Right lobe of liver (tissue), 6 donors: ENCODE measurements at regions of chr6 and their contacts with region 1.

Region 1: GRCh38 chr6:13916230-13916944 is 8.4 kb upstream of the RNF182 start:
- DNase-seq: no peak
- ATAC-seq: no peak
- H3K4me3 ChIP-seq: no peak overlapping the region
- H3K27ac ChIP-seq: no peak overlapping the region
- H3K4me1 ChIP-seq: no peaks in the 10 kb centered on the region
- H3K27me3 ChIP-seq: peaks cover 0 to 2% of the 10 kb centered on the region in 2 donors
- CTCF ChIP-seq: no peak
- POLR2A ChIP-seq: no peak

Region 2: GRCh38 chr6:13538084-13538483 is 378.3 kb before region 1 on chr6:
- intact Hi-C with region 1: no loop called
- DNase-seq: no peak
- ATAC-seq: peak; percentile 66 to 81 (median 75)
- H3K4me3 ChIP-seq: no peak overlapping the region
- H3K27ac ChIP-seq: no peak overlapping the region
- H3K4me1 ChIP-seq: peaks cover 0 to 14% (median 0%) of the 10 kb centered on the region in 4 donors
- H3K27me3 ChIP-seq: no peaks in the 10 kb centered on the region
- CTCF ChIP-seq: peak; percentile 37 to 48 (median 42)
- POLR2A ChIP-seq: no peak

Region 3: GRCh38 chr6:13859871-13860555 is 56.4 kb before region 1 on chr6:
- intact Hi-C with region 1: no loop called
- DNase-seq: peak; percentile 25 to 53 (median 45)
- ATAC-seq: peak in 3 of 4 donors; percentile 11 to 36 (median 33)
- H3K4me3 ChIP-seq: peak overlapping the region in 1 of 3 donors; percentile 30
- H3K27ac ChIP-seq: no peak overlapping the region
- H3K4me1 ChIP-seq: peaks cover 0 to 10% (median 0%) of the 10 kb centered on the region in 4 donors
- H3K27me3 ChIP-seq: peaks cover 7 to 15% of the 10 kb centered on the region in 2 donors
- CTCF ChIP-seq: no peak
- POLR2A ChIP-seq: no peak

Region 4: GRCh38 chr6:14059791-14060444 is 143.5 kb after region 1 on chr6:
- intact Hi-C with region 1: loop called in 1 of 2 experiments (anchors 10 kb)
- DNase-seq: peak; percentile 89 to 92 (median 91)
- ATAC-seq: peak; percentile 93 to 98 (median 95)
- H3K4me3 ChIP-seq: no peak overlapping the region
- H3K27ac ChIP-seq: no peak overlapping the region
- H3K4me1 ChIP-seq: peaks cover 0 to 8% (median 0%) of the 10 kb centered on the region in 4 donors
- H3K27me3 ChIP-seq: no peaks in the 10 kb centered on the region
- CTCF ChIP-seq: no peak
- POLR2A ChIP-seq: no peak